Lower leg skin (tissue), 4 donors: ENCODE measurements at regions of chr1 and their contacts with region 1.

Region 1: DNA sequence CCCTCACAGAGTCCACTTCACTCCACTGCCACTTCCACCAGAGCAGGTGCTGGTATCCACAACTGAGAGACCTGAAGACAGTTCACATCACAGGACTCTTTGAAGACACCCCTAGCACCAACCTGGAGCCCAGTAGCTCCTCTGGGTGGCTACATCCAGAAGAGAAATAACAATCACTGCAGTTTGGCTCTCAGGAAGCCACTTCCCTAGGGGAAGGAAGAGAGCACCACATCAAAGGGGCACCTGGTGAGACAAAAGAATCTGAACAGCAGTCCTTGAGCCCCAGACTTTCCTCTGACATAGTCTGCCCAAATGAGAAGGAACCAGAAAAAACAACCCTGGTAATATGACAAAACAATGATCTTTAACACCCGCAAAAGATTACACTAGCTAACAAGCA is 113.2 kb downstream of the TENT5C start:
- DNase-seq: no peak
- H3K4me3 ChIP-seq: no peak overlapping the region
- CTCF ChIP-seq: no peak
- POLR2A ChIP-seq: no peak

Region 2: DNA sequence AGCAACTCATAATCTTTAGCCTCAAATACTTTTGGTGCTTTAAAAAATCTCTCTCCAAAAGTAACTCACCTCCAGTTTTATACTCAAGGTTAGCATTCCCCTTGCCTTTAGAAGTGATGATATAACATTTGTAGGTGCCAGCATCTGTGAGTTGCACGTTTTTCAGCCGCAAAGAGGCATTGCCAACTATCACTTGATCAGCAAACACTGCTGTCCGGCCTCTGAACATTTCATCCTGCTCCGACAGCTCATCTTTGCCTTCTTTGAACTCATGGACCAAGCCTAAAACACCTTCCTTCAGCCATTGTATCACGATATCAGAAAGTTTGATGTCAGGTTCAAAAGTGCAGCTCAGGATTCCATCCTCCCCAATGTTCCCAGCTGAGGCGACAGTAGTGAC is 562.5 kb before region 1 on chr1:
- intact Hi-C with region 1: loop called (anchors 5 kb)
- DNase-seq: no peak
- H3K4me3 ChIP-seq: no peak overlapping the region
- CTCF ChIP-seq: no peak
- POLR2A ChIP-seq: no peak